OCI-LY7 (cell line): ENCODE measurements at regions of chr6 and their contacts with region 1.

Region 1: GRCh38 chr6:12605888-12606345 is 110.7 kb upstream of the PHACTR1 start:
- DNase-seq: peak; percentile 86
- H3K4me3 ChIP-seq: peak overlapping the region; percentile 55
- H3K27ac ChIP-seq: no peak overlapping the region
- H3K4me1 ChIP-seq: peaks cover 58% of the 10 kb centered on the region
- CTCF ChIP-seq: peak; percentile 98

Region 2: GRCh38 chr6:11585426-11586016 is 1020.4 kb before region 1 on chr6:
- CTCF ChIA-PET with region 1: no interaction called
- POLR2A ChIA-PET with region 1: no interaction called
- intact Hi-C with region 1: loop called (anchors 10 kb)
- DNase-seq: peak; percentile 43
- H3K4me3 ChIP-seq: no peak overlapping the region
- H3K27ac ChIP-seq: no peak overlapping the region
- H3K4me1 ChIP-seq: no peaks in the 10 kb centered on the region
- CTCF ChIP-seq: peak; percentile 88

Region 3: GRCh38 chr6:11692448-11693376 is 913.2 kb before region 1 on chr6:
- CTCF ChIA-PET with region 1: no interaction called
- POLR2A ChIA-PET with region 1: no interaction called
- intact Hi-C with region 1: loop called (anchors 10 kb)
- DNase-seq: no peak
- H3K4me3 ChIP-seq: no peak overlapping the region
- H3K27ac ChIP-seq: no peak overlapping the region
- H3K4me1 ChIP-seq: no peaks in the 10 kb centered on the region
- CTCF ChIP-seq: no peak

Region 4: GRCh38 chr6:12150812-12151432 is 455.0 kb before region 1 on chr6:
- CTCF ChIA-PET with region 1: no interaction called
- POLR2A ChIA-PET with region 1: no interaction called
- intact Hi-C with region 1: loop called (anchors 10 kb)
- DNase-seq: peak; percentile 47
- H3K4me3 ChIP-seq: no peak overlapping the region
- H3K27ac ChIP-seq: no peak overlapping the region
- H3K4me1 ChIP-seq: peaks cover 6% of the 10 kb centered on the region
- CTCF ChIP-seq: peak; percentile 86

Region 5: DNA sequence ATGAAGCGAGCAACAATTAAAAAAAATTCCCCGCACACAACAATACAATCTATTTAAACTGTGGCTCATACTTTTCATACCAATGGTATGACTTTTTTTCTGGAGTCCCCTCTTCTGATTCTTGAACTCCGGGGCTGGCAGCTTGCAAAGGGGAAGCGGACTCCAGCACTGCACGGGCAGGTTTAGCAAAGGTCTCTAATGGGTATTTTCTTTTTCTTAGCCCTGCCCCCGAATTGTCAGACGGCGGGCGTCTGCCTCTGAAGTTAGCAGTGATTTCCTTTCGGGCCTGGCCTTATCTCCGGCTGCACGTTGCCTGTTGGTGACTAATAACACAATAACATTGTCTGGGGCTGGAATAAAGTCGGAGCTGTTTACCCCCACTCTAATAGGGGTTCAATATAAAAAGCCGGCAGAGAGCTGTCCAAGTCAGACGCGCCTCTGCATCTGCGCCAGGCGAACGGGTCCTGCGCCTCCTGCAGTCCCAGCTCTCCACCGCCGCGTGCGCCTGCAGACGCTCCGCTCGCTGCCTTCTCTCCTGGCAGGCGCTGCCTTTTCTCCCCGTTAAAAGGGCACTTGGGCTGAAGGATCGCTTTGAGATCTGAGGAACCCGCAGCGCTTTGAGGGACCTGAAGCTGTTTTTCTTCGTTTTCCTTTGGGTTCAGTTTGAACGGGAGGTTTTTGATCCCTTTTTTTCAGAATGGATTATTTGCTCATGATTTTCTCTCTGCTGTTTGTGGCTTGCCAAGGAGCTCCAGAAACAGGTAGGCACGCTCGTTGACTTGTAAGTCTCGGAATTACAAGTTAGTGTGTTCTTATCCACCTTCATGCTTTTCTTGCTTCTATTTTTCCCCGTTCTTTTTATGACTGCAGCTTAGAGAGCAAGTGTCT is 315.7 kb before region 1 on chr6 and contains the start of gene EDN1:
- CTCF ChIA-PET with region 1: interaction called, 4 read pairs
- POLR2A ChIA-PET with region 1: no interaction called
- intact Hi-C with region 1: loop called (anchors 1 kb)
- DNase-seq: peak; percentile 57
- H3K4me3 ChIP-seq: peak within 1 kb of the TSS; percentile 57
- H3K27ac ChIP-seq: no peak within 1 kb of the TSS
- H3K4me1 ChIP-seq: no peaks in the 10 kb centered on the region
- CTCF ChIP-seq: peak; percentile 36; the same call in 1 of the 2 replicates
- total RNA-seq, gene EDN1: not detected in 2 replicates

Region 6: GRCh38 chr6:12636336-12636735 is 30.4 kb after region 1 on chr6:
- CTCF ChIA-PET with region 1: no interaction called
- POLR2A ChIA-PET with region 1: no interaction called
- intact Hi-C with region 1: no loop called
- DNase-seq: no peak
- H3K4me3 ChIP-seq: no peak overlapping the region
- H3K27ac ChIP-seq: no peak overlapping the region
- H3K4me1 ChIP-seq: no peaks in the 10 kb centered on the region
- CTCF ChIP-seq: peak; percentile 45